Activated CD4-positive, alpha-beta T cell treated with anti-CD3 and anti-CD28 coated beads, Interleukin-2, amount 10 ng/mL, durations not matched to agents 7 days and 5 days (primary cell): ENCODE measurements at regions of chr20 and their contacts with region 1.

Region 1: GRCh38 chr20:24992487-24993205 is at the start of gene APMAP:
- DNase-seq: peak; percentile 96
- H3K4me3 Mint-ChIP-seq: peak within 1 kb of the TSS; percentile 97
- H3K27ac Mint-ChIP-seq: peak within 1 kb of the TSS; percentile 97
- H3K4me1 Mint-ChIP-seq: peaks cover 58% of the 10 kb centered on the region
- H3K27me3 Mint-ChIP-seq: peaks cover 4% of the 10 kb centered on the region
- total RNA-seq, gene APMAP: 38.7 to 41.3 TPM

Region 2: DNA sequence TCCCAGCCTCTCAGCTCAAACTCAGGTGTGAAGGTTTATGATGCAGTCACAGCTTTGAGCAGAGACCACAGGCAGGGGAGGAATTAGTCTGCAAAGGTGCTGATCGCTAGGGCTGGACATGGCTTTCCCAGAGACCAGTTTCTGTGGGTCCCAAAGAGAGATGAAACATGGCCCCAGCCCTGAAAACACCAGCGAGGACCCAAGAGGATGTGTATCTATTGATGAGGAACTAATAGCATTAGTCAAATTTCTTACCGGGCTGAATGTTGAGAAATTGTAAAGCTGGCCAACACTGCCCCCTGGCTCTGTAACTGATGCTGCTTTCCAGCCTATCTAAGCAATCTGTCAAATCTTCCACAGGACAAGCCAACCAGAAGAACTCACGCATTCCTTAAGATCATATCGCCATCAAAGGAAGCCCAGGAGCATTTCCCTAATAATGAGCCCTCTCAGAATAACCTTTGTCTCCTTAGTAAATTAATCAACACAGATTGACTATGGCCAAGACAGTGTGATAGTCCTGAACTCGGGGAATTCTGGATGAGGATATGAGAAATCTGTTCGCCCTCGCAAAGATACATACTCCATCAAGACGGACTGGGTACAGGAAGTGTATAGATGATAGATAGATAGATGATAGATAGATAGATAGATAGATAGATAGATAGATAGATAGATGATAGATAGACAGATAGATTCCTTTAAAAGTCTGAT is 73.1 kb after region 1 on chr20:
- CTCF ChIA-PET with region 1: interaction called, 50 read pairs
- POLR2A ChIA-PET with region 1: no interaction called
- DNase-seq: peak; percentile 69
- H3K4me3 Mint-ChIP-seq: no peak overlapping the region
- H3K27ac Mint-ChIP-seq: no peak overlapping the region
- H3K4me1 Mint-ChIP-seq: peaks cover 3% of the 10 kb centered on the region
- H3K27me3 Mint-ChIP-seq: peaks cover 33% of the 10 kb centered on the region

Region 3: DNA sequence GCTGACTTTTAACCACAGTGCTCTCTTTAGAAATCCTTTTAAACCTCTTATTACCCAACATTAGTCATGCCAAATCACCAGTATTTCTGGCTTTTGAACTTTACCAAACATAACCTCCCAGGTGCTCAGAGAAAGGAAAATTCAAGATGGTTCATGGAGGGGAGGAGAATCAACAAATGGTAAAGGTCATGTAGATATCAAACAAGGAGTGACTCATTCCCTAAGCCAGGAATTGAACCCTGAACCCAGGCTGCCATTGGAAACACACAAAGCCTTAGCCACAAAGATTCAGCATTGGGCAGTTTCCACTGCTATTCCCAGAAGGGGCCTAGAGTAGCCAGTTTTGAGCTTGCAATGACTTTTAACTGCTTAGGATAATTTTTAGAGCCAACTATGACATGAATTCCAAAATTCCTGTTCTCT is 181.3 kb after region 1 on chr20:
- CTCF ChIA-PET with region 1: interaction called, 10 read pairs
- POLR2A ChIA-PET with region 1: no interaction called
- DNase-seq: no peak
- H3K4me3 Mint-ChIP-seq: no peak overlapping the region
- H3K27ac Mint-ChIP-seq: no peak overlapping the region
- H3K4me1 Mint-ChIP-seq: no peaks in the 10 kb centered on the region
- H3K27me3 Mint-ChIP-seq: peaks cover 9% of the 10 kb centered on the region